ENCODE measurements at regions of chr9 and their contacts with region 1.

Region 1: DNA sequence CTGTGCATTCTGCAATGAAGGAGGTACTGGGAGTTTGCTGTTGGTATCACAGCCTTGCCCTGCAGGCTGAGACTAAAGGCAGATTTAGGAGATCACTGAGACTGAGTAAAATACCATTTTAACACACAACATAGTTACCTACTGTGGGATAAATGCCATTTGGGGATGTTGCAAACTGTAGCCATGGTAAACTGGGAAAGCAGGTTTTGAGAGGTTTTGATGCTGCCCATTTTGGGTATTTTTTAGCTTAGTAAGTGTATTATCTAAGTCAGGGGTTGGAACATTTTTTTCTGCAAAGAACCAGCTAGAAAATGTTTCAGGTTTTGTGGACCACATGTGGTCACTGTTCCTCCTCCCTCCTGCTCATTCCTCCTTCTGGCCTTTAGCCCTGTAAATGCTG is 108.9 kb downstream of the EHMT1 start:
- DNase-seq: no peak

Region 2: DNA sequence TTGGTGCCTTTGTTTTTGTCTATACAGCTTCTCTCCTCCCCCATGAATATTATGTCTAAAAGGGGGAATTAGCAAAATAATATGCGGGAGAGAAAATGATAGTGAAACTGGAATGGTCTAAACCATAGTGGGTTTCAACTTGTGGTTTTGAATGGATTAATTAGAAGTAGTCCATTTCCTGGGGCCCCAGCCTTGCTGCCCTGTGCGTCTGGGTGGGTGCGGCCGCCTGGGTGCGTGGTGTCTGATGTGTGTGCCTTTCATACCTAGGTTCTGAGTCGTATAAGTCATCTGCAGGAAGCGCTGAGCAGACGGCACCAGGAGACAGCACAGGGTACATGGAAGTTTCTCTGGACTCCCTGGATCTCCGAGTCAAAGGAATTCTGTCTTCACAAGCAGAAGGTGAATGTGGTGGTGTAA is 29.9 kb after region 1 on chr9:
- intact Hi-C with region 1: loop called in 1 of 2 experiments (anchors 2 kb)
- DNase-seq: no peak